ENCODE measurements at regions of chr22 and their contacts with region 1.

Region 1: DNA sequence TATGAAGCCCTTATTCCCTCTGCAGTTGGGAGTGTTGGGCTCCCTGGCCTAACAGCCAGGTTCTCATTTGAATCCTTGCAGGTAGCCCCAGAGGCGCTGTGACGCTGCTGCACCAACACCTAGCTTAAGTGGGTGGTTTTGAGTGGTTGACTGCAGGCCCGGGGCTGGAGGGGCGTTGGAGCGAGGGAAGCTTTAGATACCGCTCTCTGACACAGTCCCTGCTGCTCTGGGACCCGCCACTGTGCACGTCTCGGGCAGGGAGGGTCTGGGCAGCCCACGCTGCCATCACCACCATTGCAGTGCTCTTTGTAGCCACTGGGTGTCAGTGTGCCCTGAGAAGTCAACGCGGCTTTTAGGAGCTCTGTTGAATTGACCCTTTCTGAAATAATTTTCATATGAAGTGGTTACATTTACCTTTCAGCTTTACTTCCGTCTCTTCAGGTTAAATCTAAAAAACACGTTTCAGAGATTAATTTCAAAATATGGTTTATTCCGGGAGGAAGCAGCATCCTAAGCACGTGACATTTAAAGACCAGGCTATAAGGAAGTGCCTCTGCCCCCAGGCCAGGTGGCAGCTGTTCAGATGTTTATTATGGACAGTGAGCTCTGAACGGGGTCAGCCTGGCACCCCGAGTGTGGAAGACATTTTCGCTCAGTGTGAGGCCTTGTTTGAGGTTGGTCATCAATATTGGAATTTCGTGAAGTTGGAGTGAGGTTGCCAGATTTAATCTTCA is 30.9 kb upstream of the PARVB start:
- DNase-seq: peak; percentile 5
- ATAC-seq: peak; percentile 84
- H3K4me3 ChIP-seq: no peak overlapping the region
- H3K27ac ChIP-seq: no peak overlapping the region
- H3K4me1 ChIP-seq: peaks cover 15% of the 10 kb centered on the region
- H3K27me3 ChIP-seq: no peaks in the 10 kb centered on the region
- CTCF ChIP-seq: peak; percentile 96 to 98 (median 97)
- EP300 ChIP-seq: no peak
- POLR2A ChIP-seq: no peak
- RAD21 ChIP-seq: peak; percentile 98

Region 2: DNA sequence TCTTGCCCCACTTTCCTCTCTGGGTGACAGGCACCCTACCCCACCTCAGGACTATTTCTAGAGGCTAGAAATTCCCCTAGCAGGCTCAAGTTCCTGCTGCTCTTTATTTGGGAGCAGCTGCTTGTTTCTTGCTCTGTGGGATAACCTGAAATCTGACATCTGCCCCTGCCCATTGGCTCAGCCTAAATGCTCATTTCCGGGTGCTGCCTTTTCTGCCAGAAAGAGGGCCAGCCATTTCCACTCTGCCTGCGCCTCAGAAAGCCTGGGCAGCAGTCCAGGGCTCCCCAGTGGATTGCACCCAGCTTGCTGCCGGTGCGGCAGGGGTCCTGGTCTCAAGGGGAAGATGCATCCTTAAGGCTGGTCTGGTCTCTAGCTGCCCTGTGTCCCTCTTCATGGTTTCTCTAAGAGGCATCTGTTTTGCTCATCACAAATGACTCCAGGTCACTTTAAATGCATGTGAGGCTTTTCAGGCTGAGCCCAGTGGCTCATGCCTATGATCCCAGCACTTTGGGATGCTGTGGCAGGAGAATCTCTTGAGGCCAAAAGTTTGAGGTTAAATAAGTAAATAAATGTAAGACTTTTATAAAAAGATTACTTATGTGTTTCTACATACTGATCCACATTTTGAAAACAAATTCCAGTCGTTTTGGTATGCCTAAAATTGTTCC is 91.1 kb before region 1 on chr22:
- CTCF ChIA-PET with region 1: no interaction called
- POLR2A ChIA-PET with region 1: no interaction called
- RAD21 ChIA-PET with region 1: no interaction called
- SMC1A ChIA-PET with region 1: no interaction called
- in situ Hi-C with region 1: no loop called
- intact Hi-C with region 1: no loop called
- DNase-seq: no peak
- ATAC-seq: no peak
- H3K4me3 ChIP-seq: no peak overlapping the region
- H3K27ac ChIP-seq: no peak overlapping the region
- H3K4me1 ChIP-seq: no peaks in the 10 kb centered on the region
- H3K27me3 ChIP-seq: peaks cover 4 to 5% of the 10 kb centered on the region in 2 experiments
- CTCF ChIP-seq: no peak
- EP300 ChIP-seq: no peak
- POLR2A ChIP-seq: no peak
- RAD21 ChIP-seq: no peak

Region 3: GRCh38 chr22:44020981-44021380 is 27.8 kb after region 1 on chr22:
- CTCF ChIA-PET with region 1: interaction called, 74 read pairs
- POLR2A ChIA-PET with region 1: interaction called, 23 read pairs
- RAD21 ChIA-PET with region 1: interaction called, 12 read pairs
- SMC1A ChIA-PET with region 1: interaction called, 29 read pairs
- in situ Hi-C with region 1: no loop called
- intact Hi-C with region 1: no loop called
- DNase-seq: no peak
- ATAC-seq: no peak
- H3K4me3 ChIP-seq: 0 out of 2 replicates have a peak overlapping the region, but pooled peaks have one; percentile 40
- H3K27ac ChIP-seq: no peak overlapping the region
- H3K4me1 ChIP-seq: peaks cover 3% of the 10 kb centered on the region; the same call in 1 of the 2 replicates
- H3K27me3 ChIP-seq: no peaks in the 10 kb centered on the region
- CTCF ChIP-seq: no peak
- EP300 ChIP-seq: no peak
- POLR2A ChIP-seq: no peak
- RAD21 ChIP-seq: no peak

Region 4: DNA sequence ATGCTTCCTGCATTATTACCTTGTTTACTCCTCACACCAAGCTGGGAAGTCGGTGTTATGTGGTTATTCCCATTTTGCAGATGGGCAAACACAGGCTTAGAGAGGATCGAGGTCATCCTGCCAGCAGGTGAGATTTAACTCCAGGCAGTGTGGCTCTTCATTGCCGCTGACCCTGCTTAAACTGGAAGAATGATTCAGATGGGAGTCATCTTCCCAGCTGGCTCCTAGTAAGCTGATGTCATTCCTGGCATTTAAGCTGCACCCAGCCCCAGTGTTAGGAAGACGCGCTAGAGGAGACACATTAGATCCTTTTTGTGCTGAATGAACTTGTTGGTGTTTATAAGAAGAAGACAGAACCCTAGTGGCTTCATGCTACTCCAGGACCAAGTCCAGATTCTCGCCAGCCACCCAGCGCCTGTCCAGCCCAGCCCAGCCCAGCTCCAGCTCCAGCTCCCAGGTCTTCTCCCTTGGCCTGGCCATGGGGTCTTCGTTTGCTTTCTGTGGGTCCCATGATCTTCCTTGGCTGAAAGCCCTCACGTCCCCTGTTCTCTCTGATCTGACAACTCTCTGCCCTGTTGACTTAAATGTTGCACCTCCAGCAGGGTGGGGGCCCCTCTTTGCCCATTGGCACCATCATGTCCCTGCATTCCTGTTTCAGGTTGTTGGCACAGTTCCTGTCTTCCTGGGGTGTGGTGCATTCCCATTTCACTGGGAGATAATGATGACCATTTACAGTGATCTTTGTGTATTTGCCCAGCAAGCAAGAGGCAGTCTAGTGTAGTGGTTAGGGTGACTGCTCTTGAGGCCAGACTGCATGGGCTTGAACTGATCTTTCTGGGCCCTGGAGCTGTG is 44.6 kb after region 1 on chr22:
- CTCF ChIA-PET with region 1: interaction called, 15 read pairs
- POLR2A ChIA-PET with region 1: no interaction called
- RAD21 ChIA-PET with region 1: no interaction called
- SMC1A ChIA-PET with region 1: interaction called, 7 read pairs
- in situ Hi-C with region 1: no loop called
- intact Hi-C with region 1: no loop called
- DNase-seq: no peak
- ATAC-seq: no peak
- H3K4me3 ChIP-seq: no peak overlapping the region
- H3K27ac ChIP-seq: no peak overlapping the region
- H3K4me1 ChIP-seq: peaks cover 18% of the 10 kb centered on the region
- H3K27me3 ChIP-seq: no peaks in the 10 kb centered on the region
- CTCF ChIP-seq: no peak
- EP300 ChIP-seq: no peak
- POLR2A ChIP-seq: no peak
- RAD21 ChIP-seq: no peak

Region 5: GRCh38 chr22:44068422-44069191 is 75.4 kb after region 1 on chr22:
- CTCF ChIA-PET with region 1: interaction called, 44 read pairs
- POLR2A ChIA-PET with region 1: no interaction called
- RAD21 ChIA-PET with region 1: interaction called, 16 read pairs
- SMC1A ChIA-PET with region 1: interaction called, 22 read pairs
- in situ Hi-C with region 1: no loop called
- intact Hi-C with region 1: loop called (anchors 5 kb)
- DNase-seq: peak; percentile 56
- ATAC-seq: peak; percentile 84
- H3K4me3 ChIP-seq: peak overlapping the region; percentile 18; the same call in 1 of the 2 replicates
- H3K27ac ChIP-seq: peak overlapping the region; percentile 78
- H3K4me1 ChIP-seq: peaks cover 39% of the 10 kb centered on the region
- H3K27me3 ChIP-seq: no peaks in the 10 kb centered on the region
- CTCF ChIP-seq: peak; percentile 4 to 21 (median 6); a peak in 2 of 6 replicates
- EP300 ChIP-seq: 0 out of 4 replicates have a peak, but pooled peaks of 1 of the 2 experiments have one; percentile 5
- POLR2A ChIP-seq: no peak
- RAD21 ChIP-seq: no peak

Region 6: GRCh38 chr22:44567846-44568493 is 574.8 kb after region 1 on chr22:
- CTCF ChIA-PET with region 1: interaction called, 26 read pairs
- POLR2A ChIA-PET with region 1: no interaction called
- RAD21 ChIA-PET with region 1: interaction called, 14 read pairs
- SMC1A ChIA-PET with region 1: interaction called, 9 read pairs
- in situ Hi-C with region 1: loop called (anchors 5 kb)
- intact Hi-C with region 1: no loop called
- DNase-seq: no peak
- ATAC-seq: no peak
- H3K4me3 ChIP-seq: no peak overlapping the region
- H3K27ac ChIP-seq: no peak overlapping the region
- H3K4me1 ChIP-seq: no peaks in the 10 kb centered on the region
- H3K27me3 ChIP-seq: peaks cover 0 to 5% of the 10 kb centered on the region in 2 experiments; a peak in 2 of 4 replicates
- CTCF ChIP-seq: peak; percentile 37 to 60 (median 47)
- EP300 ChIP-seq: no peak
- POLR2A ChIP-seq: no peak
- RAD21 ChIP-seq: peak; percentile 56

Region 7: DNA sequence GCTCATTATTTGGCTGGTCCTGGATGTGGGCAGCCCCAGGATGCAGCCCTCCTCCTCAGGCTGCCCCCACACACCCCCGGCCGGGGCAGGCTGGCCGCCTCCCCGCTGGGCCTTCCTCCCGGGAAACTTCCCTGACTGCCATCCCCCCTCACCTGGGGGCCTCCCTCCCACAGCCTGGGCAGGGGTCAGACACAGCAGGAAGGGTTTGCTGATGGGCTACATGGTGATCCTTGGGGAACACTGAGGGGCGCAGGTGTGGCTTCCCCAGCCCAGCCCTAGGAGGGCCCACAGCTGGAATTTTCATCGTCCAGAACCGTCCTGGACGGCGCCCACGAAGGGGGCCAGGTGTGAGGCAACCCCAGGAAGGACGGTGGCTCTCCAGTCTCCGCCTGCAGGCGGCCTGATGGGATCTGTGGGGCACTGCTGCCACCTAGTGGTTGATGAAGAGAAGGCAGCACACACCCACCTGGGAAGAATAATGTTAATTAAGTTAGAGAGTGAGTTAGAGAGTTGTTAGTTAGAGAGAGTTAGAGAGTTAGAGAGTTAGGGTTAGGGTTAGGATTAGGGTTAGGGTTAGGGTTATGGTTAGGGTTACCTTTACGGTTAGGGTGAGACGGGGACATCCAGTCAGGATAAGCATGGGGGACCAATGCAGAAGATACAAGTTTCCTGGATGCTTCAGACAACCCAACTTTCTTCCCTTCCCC is 632.9 kb after region 1 on chr22:
- CTCF ChIA-PET with region 1: interaction called, 23 read pairs
- POLR2A ChIA-PET with region 1: no interaction called
- RAD21 ChIA-PET with region 1: interaction called, 8 read pairs
- SMC1A ChIA-PET with region 1: interaction called, 6 read pairs
- in situ Hi-C with region 1: loop called (anchors 5 kb)
- intact Hi-C with region 1: loop called (anchors 2 kb)
- DNase-seq: peak; percentile 15
- ATAC-seq: peak; percentile 94
- H3K4me3 ChIP-seq: no peak overlapping the region
- H3K27ac ChIP-seq: no peak overlapping the region
- H3K4me1 ChIP-seq: no peaks in the 10 kb centered on the region
- H3K27me3 ChIP-seq: no peaks in the 10 kb centered on the region
- CTCF ChIP-seq: peak; percentile 89 to 99 (median 92)
- EP300 ChIP-seq: no peak
- POLR2A ChIP-seq: no peak
- RAD21 ChIP-seq: peak; percentile 97

Measured in GM12878 (cell line).